CD4-positive, alpha-beta T cell (primary cell): ENCODE measurements at regions of chr3 and their contacts with region 1.

Region 1: DNA sequence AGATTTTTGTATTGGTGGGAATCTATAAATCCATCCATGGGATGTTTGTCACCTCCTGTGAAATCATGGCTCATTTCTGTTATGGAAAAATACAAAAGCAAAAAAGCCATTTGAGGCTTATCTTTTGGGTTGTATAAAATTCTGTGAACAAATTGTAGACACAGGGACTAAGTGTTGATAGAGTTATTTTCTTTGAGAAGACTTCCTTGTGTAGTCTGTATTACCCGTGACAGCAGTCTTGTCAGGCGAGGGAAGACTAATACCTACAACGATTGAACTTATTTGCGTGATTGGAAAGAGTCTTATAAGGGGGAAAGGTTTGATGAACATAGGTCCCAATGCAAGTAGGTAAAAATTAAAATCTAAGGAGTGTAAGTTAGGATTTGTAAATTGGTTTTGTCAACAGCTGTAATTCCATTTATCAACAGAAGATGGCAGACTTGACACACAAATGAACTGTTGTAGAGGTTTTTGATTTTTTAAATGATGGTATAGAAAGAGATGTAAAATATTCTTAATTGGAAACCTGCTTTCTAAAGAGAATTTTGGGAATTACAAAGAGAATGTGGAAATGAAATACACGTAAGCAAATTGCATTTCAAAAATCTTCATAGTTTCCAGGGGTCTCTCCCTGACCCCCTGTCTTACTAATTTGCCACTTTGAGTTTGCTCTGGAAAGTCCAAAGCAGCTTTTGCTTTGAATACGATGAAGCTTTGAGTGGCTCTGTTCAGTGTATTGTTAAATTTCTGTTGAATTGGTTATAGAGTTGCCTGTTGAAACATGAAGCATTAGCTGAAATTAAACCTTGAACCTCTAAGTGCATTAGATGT is 33.2 kb downstream of the SLC25A26 start:
- DNase-seq: peak in 3 of 14 experiments; percentile 41 to 66 (median 61)
- ATAC-seq: no peak
- H3K4me3 ChIP-seq: no peak overlapping the region
- H3K4me3 Mint-ChIP-seq: no peak overlapping the region
- H3K27ac ChIP-seq: no peak overlapping the region
- H3K27ac Mint-ChIP-seq: no peak overlapping the region
- H3K4me1 ChIP-seq: no peaks in the 10 kb centered on the region
- H3K4me1 Mint-ChIP-seq: peaks cover 5% of the 10 kb centered on the region
- H3K27me3 ChIP-seq: no peaks in the 10 kb centered on the region
- H3K27me3 Mint-ChIP-seq: no peaks in the 10 kb centered on the region
- CTCF ChIP-seq: peak; percentile 93

Region 2: GRCh38 chr3:66378256-66378823 is 124.3 kb after region 1 on chr3:
- CTCF ChIA-PET with region 1: interaction called, 10 read pairs
- POLR2A ChIA-PET with region 1: interaction called, 3 read pairs
- intact Hi-C with region 1: no loop called
- DNase-seq: peak in 13 of 14 experiments; percentile 19 to 75 (median 39)
- ATAC-seq: peak; percentile 72
- H3K4me3 ChIP-seq: no peak overlapping the region
- H3K4me3 Mint-ChIP-seq: no peak overlapping the region
- H3K27ac ChIP-seq: peak overlapping the region in 1 of 2 donors; percentile 70
- H3K27ac Mint-ChIP-seq: peak overlapping the region; percentile 85
- H3K4me1 ChIP-seq: peaks cover 14% of the 10 kb centered on the region
- H3K4me1 Mint-ChIP-seq: peaks cover 18% of the 10 kb centered on the region
- H3K27me3 ChIP-seq: no peaks in the 10 kb centered on the region
- H3K27me3 Mint-ChIP-seq: no peaks in the 10 kb centered on the region
- CTCF ChIP-seq: peak; percentile 55

Region 3: DNA sequence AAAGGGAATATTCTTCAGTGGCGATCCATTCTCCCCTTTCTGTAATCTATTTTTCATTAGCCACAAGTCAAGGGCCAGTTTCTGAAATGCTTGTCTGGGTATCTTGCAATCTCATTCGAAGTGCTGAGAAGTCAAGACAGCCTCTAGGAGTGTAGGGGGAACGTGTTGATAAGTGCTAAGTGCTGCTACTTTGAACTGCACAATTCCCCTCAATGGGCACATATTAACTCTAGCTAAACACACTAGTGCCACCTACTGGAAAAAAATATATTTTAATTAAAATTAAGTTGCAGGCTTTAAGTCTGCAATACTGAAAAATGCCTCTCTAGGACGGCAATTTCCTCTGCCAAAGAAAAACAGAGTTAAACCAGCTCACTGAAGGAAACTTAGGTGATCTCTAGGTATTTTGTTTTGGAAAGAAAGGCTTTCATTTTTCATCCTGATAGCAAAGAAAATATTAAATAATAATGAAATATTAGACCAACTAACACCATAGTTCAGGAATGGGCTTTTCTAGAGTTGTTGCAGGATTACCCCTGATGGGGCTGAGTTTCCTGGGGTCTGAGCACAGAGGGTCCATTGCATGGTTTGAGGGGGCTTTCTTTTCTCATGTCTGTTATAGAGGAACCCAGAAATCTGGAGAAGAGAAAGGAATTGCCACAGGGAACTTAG is 562.2 kb after region 1 on chr3:
- CTCF ChIA-PET with region 1: interaction called, 15 read pairs
- POLR2A ChIA-PET with region 1: no interaction called
- intact Hi-C with region 1: loop called (anchors 1 kb)
- DNase-seq: peak in 5 of 14 experiments; percentile 5 to 65 (median 63)
- ATAC-seq: peak; percentile 62
- H3K4me3 ChIP-seq: no peak overlapping the region
- H3K4me3 Mint-ChIP-seq: no peak overlapping the region
- H3K27ac ChIP-seq: no peak overlapping the region
- H3K27ac Mint-ChIP-seq: no peak overlapping the region
- H3K4me1 ChIP-seq: no peaks in the 10 kb centered on the region
- H3K4me1 Mint-ChIP-seq: no peaks in the 10 kb centered on the region
- H3K27me3 ChIP-seq: no peaks in the 10 kb centered on the region
- H3K27me3 Mint-ChIP-seq: peaks cover 8% of the 10 kb centered on the region
- CTCF ChIP-seq: peak; percentile 74

Region 4: DNA sequence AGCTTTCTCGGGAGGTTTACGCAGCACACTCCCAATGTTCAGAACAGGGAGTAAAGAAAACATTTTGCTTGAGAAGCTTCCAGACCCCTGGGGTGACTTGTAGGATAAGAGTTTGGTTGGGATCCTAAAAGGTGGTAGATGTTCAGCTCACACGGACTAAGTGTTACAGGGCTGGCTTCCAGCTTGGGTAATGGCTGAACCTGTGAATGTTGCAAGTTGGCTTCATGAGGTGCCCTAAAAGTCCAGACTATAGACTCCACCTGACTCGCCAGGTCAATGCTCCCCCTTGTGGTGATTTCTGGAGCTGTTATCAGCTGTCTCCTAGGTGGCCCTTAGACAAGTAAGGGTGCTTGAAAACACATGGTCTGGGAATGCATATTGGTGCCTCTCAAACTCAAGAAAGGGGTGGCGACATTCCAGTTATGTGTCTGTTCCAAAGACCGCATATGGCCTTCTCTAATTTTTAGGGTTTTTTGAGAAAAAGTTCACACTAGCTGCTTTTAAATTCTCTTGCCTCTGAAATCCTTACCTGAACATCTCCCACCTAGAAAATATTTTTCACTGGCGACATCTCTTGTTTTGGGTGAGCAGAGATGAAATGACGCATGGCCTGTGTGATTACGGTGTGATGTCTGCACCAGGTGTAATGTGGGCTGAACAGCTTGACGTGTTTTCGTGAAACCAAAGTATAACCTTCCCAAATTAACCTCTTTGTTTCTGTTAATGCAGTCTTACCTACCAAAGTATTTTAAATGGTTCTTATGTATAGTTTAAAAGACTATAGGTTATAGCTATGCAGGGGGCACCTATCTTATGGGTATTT is 568.4 kb after region 1 on chr3:
- CTCF ChIA-PET with region 1: interaction called, 26 read pairs
- POLR2A ChIA-PET with region 1: interaction called, 4 read pairs
- intact Hi-C with region 1: loop called in 1 of 2 experiments (anchors 1 kb)
- DNase-seq: peak; percentile 44 to 79 (median 62)
- ATAC-seq: peak; percentile 76
- H3K4me3 ChIP-seq: no peak overlapping the region
- H3K4me3 Mint-ChIP-seq: no peak overlapping the region
- H3K27ac ChIP-seq: no peak overlapping the region
- H3K27ac Mint-ChIP-seq: no peak overlapping the region
- H3K4me1 ChIP-seq: no peaks in the 10 kb centered on the region
- H3K4me1 Mint-ChIP-seq: no peaks in the 10 kb centered on the region
- H3K27me3 ChIP-seq: no peaks in the 10 kb centered on the region
- H3K27me3 Mint-ChIP-seq: peaks cover 13% of the 10 kb centered on the region
- CTCF ChIP-seq: peak; percentile 74